Body of pancreas (tissue), 4 donors: ENCODE measurements at regions of chr6 and their contacts with region 1.

Region 1: DNA sequence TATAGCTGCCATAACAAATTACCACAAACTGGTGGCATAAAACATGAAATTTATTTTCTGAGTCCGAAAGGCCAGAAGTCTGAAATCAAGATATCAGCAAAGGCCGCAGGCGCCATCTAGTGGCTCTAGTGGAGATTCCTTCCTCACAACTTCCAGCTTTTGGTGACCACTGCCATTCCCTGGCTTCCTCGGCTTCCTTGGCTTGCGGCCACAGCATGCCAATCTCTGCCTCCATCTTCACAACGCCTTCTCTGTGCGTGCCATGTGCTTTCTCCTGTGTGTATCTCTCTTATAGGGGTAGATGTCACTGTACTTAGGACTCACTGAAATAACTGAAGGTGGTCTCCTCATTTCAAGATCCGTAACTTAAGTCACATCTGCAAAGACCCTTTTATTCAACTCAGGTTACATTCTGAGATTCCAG is 5.4 kb upstream of the PLAGL1 start:
- DNase-seq: peak; percentile 81 to 87 (median 82)
- ATAC-seq: no peak
- H3K4me3 ChIP-seq: no peak overlapping the region
- H3K27ac ChIP-seq: no peak overlapping the region
- H3K4me1 ChIP-seq: no peaks in the 10 kb centered on the region
- H3K27me3 ChIP-seq: no peaks in the 10 kb centered on the region
- CTCF ChIP-seq: peak; percentile 81 to 93 (median 91)
- POLR2A ChIP-seq: no peak

Region 2: DNA sequence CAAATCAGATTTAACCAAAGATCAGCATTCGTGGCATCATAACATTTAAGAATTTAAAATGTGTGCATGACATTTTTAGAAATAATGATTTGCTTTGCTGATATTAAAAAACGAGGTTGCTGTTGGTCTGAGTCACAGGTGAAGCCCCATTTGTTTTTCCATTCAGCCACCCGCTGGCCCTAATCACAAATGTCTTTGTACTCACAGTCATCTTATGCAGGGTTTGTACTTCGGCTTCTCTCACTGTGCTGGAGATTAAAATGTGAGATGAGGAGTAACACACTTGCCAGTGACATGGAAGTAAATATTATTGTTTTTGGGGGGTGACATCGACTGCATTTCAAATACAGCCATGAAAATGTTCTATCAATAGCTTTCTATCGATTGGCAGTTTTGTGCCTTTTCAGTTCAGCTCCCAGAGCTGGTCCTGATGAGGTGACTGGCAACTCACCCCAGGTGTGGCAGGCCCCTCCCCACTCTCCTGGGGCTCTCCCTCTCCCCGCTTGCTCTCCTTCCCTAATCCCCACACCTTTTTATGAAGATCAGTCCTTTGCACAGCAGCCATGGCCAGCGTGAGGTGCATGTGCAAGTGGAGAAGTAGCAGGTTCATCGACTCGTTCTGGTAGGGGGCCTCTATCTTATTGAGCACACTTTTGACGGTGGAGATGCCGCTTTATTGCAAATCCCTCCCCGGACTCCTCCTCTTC is 443.2 kb before region 1 on chr6:
- intact Hi-C with region 1: loop called (anchors 5 kb)
- DNase-seq: no peak
- ATAC-seq: no peak
- H3K4me3 ChIP-seq: no peak overlapping the region
- H3K27ac ChIP-seq: no peak overlapping the region
- H3K4me1 ChIP-seq: no peaks in the 10 kb centered on the region
- H3K27me3 ChIP-seq: no peaks in the 10 kb centered on the region
- CTCF ChIP-seq: no peak
- POLR2A ChIP-seq: no peak

Region 3: GRCh38 chr6:143755301-143755744 is 258.2 kb before region 1 on chr6:
- intact Hi-C with region 1: no loop called
- DNase-seq: no peak
- ATAC-seq: no peak
- H3K4me3 ChIP-seq: no peak overlapping the region
- H3K27ac ChIP-seq: no peak overlapping the region
- H3K4me1 ChIP-seq: no peaks in the 10 kb centered on the region
- H3K27me3 ChIP-seq: no peaks in the 10 kb centered on the region
- CTCF ChIP-seq: no peak
- POLR2A ChIP-seq: no peak

Region 4: GRCh38 chr6:143859888-143860660 is 153.4 kb before region 1 on chr6:
- intact Hi-C with region 1: no loop called
- DNase-seq: no peak
- ATAC-seq: no peak
- H3K4me3 ChIP-seq: no peak overlapping the region
- H3K27ac ChIP-seq: no peak overlapping the region
- H3K4me1 ChIP-seq: no peaks in the 10 kb centered on the region
- H3K27me3 ChIP-seq: no peaks in the 10 kb centered on the region
- CTCF ChIP-seq: no peak
- POLR2A ChIP-seq: no peak

Region 5: DNA sequence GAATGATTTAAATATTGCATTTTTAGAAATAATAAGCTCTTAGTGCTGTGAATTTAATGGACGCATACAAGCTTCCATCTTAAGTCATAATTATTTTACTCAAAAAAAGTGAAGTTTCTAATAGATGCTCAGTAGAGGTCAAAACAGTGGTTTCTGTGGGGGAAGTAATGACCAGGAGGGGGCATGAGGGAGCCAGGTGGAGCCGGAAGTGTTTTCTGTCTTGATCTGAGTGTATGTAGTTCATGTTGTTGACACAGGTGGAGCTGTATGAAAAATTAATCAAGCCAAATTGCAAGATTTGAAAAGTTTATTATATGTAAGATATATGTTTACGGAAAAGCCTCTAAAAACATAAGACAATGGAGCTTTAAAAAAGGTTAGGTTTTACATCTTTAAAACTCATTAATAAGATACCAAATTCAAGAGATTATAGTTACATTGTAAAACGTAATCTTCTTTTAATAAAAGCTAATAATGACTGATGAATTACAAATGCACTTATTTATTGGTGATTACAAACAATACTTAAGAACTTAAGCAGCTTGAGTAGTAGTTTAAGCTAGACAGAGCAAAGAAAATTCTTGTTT is 73.4 kb before region 1 on chr6:
- intact Hi-C with region 1: loop called (anchors 5 kb)
- DNase-seq: peak; percentile 54 to 70 (median 61)
- ATAC-seq: peak; percentile 89
- H3K4me3 ChIP-seq: no peak overlapping the region
- H3K27ac ChIP-seq: no peak overlapping the region
- H3K4me1 ChIP-seq: peaks cover 3% of the 10 kb centered on the region
- H3K27me3 ChIP-seq: no peaks in the 10 kb centered on the region
- CTCF ChIP-seq: peak; percentile 61 to 92 (median 80)
- POLR2A ChIP-seq: no peak